CD8-positive, alpha-beta T cell (primary cell): ENCODE measurements at regions of chr4 and their contacts with region 1.

Region 1: DNA sequence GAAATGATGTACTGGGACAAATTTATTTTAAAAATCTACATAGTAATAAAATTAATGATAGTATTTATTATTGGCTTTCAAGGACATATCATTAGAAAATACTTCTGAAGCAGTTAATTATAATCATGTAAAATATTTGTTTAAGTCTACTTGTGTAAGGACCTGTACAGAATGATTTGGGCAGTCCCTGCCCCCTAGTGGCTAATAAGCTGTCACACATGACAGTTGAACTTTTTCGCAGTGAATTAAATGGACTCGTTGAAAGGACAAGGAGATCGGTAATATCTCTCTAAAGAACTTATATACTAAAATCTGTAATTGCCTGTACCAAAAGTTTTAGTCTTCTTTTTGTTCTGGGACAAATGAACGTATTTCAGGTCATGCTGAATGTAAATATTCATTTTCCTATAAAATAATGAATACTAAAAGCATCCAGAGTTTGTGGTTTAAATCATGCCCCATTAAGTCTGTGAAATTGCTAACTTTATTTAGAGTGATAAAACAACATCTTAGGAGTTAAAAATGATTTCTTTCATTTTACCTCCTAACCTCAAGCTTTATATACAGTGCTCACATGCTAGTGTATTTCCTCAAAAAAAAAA is 13.6 kb downstream of the EXOC1 start:
- DNase-seq: peak in 5 of 9 experiments; percentile 14 to 74 (median 32)
- ATAC-seq: peak; percentile 87
- H3K4me3 ChIP-seq: no peak overlapping the region
- H3K4me3 Mint-ChIP-seq: no peak overlapping the region
- H3K27ac ChIP-seq: no peak overlapping the region
- H3K27ac Mint-ChIP-seq: no peak overlapping the region
- H3K4me1 ChIP-seq: no peaks in the 10 kb centered on the region
- H3K4me1 Mint-ChIP-seq: peaks cover 9% of the 10 kb centered on the region
- H3K27me3 ChIP-seq: no peaks in the 10 kb centered on the region
- H3K27me3 Mint-ChIP-seq: no peaks in the 10 kb centered on the region
- CTCF ChIP-seq: peak; percentile 92

Region 2: DNA sequence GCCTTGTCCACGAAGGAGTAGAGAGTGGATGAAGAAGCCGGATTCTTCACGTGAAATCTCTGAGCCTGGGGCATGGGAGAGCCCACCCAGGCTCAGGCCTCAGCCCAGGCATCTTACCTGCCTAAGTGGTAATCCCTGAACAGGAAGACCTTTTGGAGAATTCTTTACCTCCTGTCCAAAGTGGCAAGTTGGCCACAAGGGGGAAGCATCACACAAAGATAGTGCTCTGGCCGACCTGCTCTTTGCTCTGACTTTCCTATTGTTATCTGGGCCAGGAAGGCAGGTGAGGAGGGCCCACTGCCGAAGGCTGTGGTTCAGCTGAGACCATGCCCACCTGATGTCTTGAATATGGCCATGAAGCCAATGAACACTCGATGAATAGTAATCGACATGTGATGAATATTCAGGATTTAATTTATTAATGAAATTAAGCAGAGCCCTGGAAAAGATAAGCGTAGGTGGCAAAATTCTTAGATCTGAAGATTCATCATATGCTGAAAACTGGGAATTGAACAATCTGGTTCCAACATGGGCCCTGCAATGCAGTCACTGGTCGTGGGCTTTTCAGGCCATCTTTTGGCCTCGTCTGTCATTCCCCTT is 1544.2 kb before region 1 on chr4:
- CTCF ChIA-PET with region 1: no interaction called
- POLR2A ChIA-PET with region 1: no interaction called
- intact Hi-C with region 1: loop called in 1 of 2 experiments (anchors 5 kb)
- DNase-seq: peak in 7 of 9 experiments; percentile 3 to 58 (median 42)
- ATAC-seq: peak; percentile 40
- H3K4me3 ChIP-seq: no peak overlapping the region
- H3K4me3 Mint-ChIP-seq: no peak overlapping the region
- H3K27ac ChIP-seq: no peak overlapping the region
- H3K27ac Mint-ChIP-seq: no peak overlapping the region
- H3K4me1 ChIP-seq: no peaks in the 10 kb centered on the region
- H3K4me1 Mint-ChIP-seq: no peaks in the 10 kb centered on the region
- H3K27me3 ChIP-seq: no peaks in the 10 kb centered on the region
- H3K27me3 Mint-ChIP-seq: no peaks in the 10 kb centered on the region
- CTCF ChIP-seq: peak; percentile 39

Region 3: DNA sequence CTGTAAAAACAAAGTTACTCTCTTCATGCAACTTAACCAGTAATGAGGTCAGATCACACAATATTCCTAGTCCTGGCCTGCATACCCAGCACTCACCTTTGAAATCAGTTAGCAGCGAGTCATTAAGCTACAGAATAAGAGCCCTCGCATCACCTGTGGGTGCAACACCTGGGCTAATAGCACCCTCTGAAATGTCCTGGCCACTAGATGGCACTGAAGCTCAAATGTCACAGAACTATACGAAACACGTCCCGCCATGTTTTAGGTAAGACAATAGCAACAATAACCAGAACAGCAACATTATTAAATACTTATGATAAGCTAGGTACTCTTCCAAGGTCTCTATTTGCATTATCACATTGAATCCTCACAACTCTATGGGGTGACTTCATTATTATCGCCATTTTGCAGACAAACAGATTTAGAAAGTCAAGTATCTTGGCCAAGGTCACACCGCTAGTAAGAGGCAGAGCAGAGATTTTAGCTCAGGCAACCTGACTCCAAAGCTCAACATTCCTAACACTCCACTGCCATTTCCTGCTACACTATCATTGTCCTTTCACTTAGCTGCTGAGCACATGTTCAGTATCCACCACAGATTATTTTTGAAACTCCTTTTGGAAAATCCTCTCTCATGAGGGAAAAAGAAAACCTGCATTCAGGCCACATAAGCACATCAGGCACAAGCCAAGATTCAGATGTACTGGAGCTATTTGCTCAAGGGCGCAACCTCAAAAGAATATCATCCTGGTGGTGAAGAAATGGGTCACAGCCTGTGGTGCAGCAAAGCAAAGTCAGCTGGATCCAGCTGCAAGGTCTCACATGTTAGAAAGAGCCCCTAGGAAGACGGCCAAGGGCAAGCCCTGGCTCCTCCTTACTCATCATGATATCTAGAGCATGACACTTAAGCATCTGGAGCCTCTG is 682.2 kb before region 1 on chr4:
- CTCF ChIA-PET with region 1: no interaction called
- POLR2A ChIA-PET with region 1: no interaction called
- intact Hi-C with region 1: loop called in 1 of 2 experiments (anchors 10 kb)
- DNase-seq: peak in 5 of 9 experiments; percentile 7 to 52 (median 39)
- ATAC-seq: no peak
- H3K4me3 ChIP-seq: no peak overlapping the region
- H3K4me3 Mint-ChIP-seq: no peak overlapping the region
- H3K27ac ChIP-seq: no peak overlapping the region
- H3K27ac Mint-ChIP-seq: no peak overlapping the region
- H3K4me1 ChIP-seq: no peaks in the 10 kb centered on the region
- H3K4me1 Mint-ChIP-seq: no peaks in the 10 kb centered on the region
- H3K27me3 ChIP-seq: no peaks in the 10 kb centered on the region
- H3K27me3 Mint-ChIP-seq: peaks cover 9% of the 10 kb centered on the region
- CTCF ChIP-seq: peak; percentile 30

Region 4: DNA sequence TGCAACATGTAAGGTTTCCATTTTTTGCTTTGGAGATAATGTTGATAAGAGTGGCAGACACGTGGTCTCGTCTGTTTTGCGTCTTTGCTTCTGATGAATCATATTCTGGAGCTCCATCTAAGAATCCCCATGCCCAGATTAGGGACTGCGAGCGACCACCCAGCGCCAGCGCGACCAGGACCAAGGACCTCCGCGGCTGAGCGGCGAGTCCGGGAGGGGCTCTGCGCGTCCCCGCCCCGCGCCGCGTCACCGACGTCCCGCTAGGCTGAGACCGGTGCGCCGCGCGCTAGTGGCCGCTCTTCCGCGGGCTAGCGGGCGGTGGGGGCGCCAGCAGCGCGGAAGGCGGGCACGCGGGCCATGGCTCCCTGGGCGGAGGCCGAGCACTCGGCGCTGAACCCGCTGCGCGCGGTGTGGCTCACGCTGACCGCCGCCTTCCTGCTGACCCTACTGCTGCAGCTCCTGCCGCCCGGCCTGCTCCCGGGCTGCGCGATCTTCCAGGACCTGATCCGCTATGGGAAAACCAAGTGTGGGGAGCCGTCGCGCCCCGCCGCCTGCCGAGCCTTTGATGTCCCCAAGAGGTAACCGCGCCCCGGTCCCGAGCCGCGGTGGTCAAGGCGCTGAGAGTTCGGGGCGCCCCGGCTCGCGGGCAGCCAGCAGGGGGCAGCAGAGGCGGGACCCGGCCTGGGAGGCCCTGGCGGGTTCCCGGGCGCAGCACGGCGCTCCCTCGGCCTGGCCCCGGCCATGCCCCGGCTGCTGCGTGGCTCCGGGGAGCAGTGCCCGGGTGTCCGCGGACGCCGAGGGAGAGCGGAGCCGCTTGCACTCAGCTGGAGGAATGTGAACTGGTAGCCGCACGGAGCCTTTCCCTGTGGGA is 520.9 kb before region 1 on chr4 and contains the start of gene SRD5A3:
- CTCF ChIA-PET with region 1: interaction called, 5 read pairs
- POLR2A ChIA-PET with region 1: no interaction called
- intact Hi-C with region 1: loop called in 1 of 2 experiments (anchors 1 kb)
- DNase-seq: peak; percentile 57 to 89 (median 81)
- ATAC-seq: peak; percentile 85
- H3K4me3 ChIP-seq: peak within 1 kb of the TSS; percentile 68 to 88
- H3K4me3 Mint-ChIP-seq: peak within 1 kb of the TSS; percentile 86
- H3K27ac ChIP-seq: peak within 1 kb of the TSS; percentile 64 to 81
- H3K27ac Mint-ChIP-seq: peak within 1 kb of the TSS; percentile 85
- H3K4me1 ChIP-seq: peaks cover 9% of the 10 kb centered on the region
- H3K4me1 Mint-ChIP-seq: peaks cover 14% of the 10 kb centered on the region
- H3K27me3 ChIP-seq: no peaks in the 10 kb centered on the region
- H3K27me3 Mint-ChIP-seq: no peaks in the 10 kb centered on the region
- CTCF ChIP-seq: peak; percentile 97
- total RNA-seq, gene SRD5A3: 1.1 TPM

Region 5: GRCh38 chr4:55444827-55445226 is 422.2 kb before region 1 on chr4:
- CTCF ChIA-PET with region 1: no interaction called
- POLR2A ChIA-PET with region 1: no interaction called
- intact Hi-C with region 1: loop called in 1 of 2 experiments (anchors 2 kb)
- DNase-seq: peak in 1 of 9 experiments; percentile 15
- ATAC-seq: no peak
- H3K4me3 ChIP-seq: no peak overlapping the region
- H3K4me3 Mint-ChIP-seq: no peak overlapping the region
- H3K27ac ChIP-seq: no peak overlapping the region
- H3K27ac Mint-ChIP-seq: peak overlapping the region; percentile 39
- H3K4me1 ChIP-seq: no peaks in the 10 kb centered on the region
- H3K4me1 Mint-ChIP-seq: peaks cover 14% of the 10 kb centered on the region
- H3K27me3 ChIP-seq: no peaks in the 10 kb centered on the region
- H3K27me3 Mint-ChIP-seq: no peaks in the 10 kb centered on the region
- CTCF ChIP-seq: peak; percentile 20

Region 6: DNA sequence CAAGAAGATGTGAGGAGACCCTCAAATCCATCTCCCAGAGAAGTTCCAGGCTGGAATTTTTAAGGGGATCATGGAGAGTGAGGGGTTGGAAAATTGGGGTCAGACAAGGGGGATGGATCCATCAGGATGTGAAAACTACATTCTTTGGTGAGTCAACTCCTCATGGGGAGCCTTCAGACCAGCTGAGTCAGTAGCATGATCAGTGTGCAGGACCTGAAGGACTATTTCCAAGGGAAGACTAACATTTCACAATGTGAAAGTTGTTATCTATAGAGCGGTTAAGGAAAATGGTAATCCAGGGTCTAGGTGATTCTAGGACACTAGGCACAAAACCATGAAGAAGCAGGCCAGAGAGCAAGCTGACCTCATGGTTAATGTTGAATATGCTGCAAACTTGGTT is 43.1 kb after region 1 on chr4:
- CTCF ChIA-PET with region 1: no interaction called
- POLR2A ChIA-PET with region 1: no interaction called
- intact Hi-C with region 1: no loop called
- DNase-seq: no peak
- ATAC-seq: no peak
- H3K4me3 ChIP-seq: no peak overlapping the region
- H3K4me3 Mint-ChIP-seq: no peak overlapping the region
- H3K27ac ChIP-seq: no peak overlapping the region
- H3K27ac Mint-ChIP-seq: no peak overlapping the region
- H3K4me1 ChIP-seq: peaks cover 9% of the 10 kb centered on the region
- H3K4me1 Mint-ChIP-seq: peaks cover 14% of the 10 kb centered on the region
- H3K27me3 ChIP-seq: no peaks in the 10 kb centered on the region
- H3K27me3 Mint-ChIP-seq: no peaks in the 10 kb centered on the region
- CTCF ChIP-seq: no peak

Region 7: DNA sequence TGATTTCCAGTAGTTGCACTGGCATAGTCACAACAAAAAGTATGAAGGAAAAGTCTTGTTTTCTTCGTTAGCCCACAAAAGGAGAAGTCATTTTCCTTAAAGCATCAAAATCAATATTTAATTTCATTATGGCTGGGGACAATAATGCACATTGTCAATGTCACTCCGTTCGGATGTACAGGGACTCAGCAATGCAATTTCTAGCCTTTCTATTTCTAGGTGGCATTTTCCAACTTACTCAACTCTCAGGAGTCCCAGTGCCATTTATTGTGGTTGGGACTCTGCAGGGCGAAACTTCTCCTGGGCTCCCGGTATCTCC is 181.3 kb after region 1 on chr4:
- CTCF ChIA-PET with region 1: no interaction called
- POLR2A ChIA-PET with region 1: no interaction called
- intact Hi-C with region 1: no loop called
- DNase-seq: no peak
- ATAC-seq: no peak
- H3K4me3 ChIP-seq: no peak overlapping the region
- H3K4me3 Mint-ChIP-seq: peak overlapping the region; percentile 72
- H3K27ac ChIP-seq: no peak overlapping the region
- H3K27ac Mint-ChIP-seq: no peak overlapping the region
- H3K4me1 ChIP-seq: peaks cover 8% of the 10 kb centered on the region
- H3K4me1 Mint-ChIP-seq: peaks cover 13% of the 10 kb centered on the region
- H3K27me3 ChIP-seq: peaks cover 12 to 20% of the 10 kb centered on the region in 2 experiments
- H3K27me3 Mint-ChIP-seq: peaks cover 51% of the 10 kb centered on the region
- CTCF ChIP-seq: no peak